Activated B cell treated with CpG ODN at 0.5 μM for 24 hours (primary cell): ENCODE measurements at regions of chr6 and their contacts with region 1.

Region 1: GRCh38 chr6:137938770-137939379 is 71.8 kb downstream of the TNFAIP3 start:
- DNase-seq: no peak
- ATAC-seq: no peak
- H3K4me3 Mint-ChIP-seq: no peak overlapping the region
- H3K27ac Mint-ChIP-seq: no peak overlapping the region
- H3K4me1 Mint-ChIP-seq: peaks cover 18% of the 10 kb centered on the region
- H3K27me3 Mint-ChIP-seq: no peaks in the 10 kb centered on the region
- CTCF ChIP-seq: no peak

Region 2: DNA sequence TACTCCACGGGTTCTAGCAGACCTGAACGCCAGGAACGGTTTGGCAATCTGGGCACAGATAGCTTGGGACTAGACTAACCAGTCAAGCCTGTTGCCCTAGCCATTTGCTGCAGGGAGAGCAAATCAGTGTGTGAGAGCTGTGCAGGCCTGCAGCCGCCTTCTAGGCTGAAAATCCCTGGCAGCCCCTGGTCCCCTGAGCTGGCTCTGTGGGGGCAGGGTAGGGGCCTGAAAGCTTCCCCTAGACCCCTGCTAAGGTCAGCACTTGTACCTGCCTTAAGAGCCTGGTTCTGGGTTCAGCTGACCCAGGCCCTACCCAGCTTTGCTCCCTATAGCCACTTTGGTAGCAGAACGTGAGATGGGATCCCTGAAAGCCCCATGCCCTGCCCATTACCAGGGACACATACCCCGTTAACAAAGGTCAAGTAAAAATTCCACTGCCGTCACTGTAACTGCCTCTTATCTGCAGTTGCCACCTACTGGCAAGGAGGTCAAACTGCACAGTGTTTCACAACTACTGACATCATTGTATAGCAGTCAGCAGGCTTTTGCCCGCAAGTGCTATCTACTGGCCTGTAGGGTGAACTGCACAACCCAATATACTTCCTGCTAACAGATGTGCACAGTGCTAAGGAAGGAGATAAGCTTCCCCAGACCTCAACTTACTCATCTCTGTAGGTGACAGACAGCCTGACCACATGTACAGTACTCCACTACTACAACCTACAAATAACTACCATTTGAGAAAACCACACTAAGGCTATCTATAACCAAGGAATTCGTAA is 349.6 kb before region 1 on chr6:
- CTCF ChIA-PET with region 1: no interaction called
- POLR2A ChIA-PET with region 1: no interaction called
- intact Hi-C with region 1: no loop called
- DNase-seq: no peak
- ATAC-seq: peak; percentile 90
- H3K4me3 Mint-ChIP-seq: no peak overlapping the region
- H3K27ac Mint-ChIP-seq: no peak overlapping the region
- H3K4me1 Mint-ChIP-seq: no peaks in the 10 kb centered on the region
- H3K27me3 Mint-ChIP-seq: peaks cover 30% of the 10 kb centered on the region
- CTCF ChIP-seq: no peak

Region 3: GRCh38 chr6:137846772-137847313 is 92.0 kb before region 1 on chr6:
- CTCF ChIA-PET with region 1: no interaction called
- POLR2A ChIA-PET with region 1: no interaction called
- intact Hi-C with region 1: no loop called
- DNase-seq: peak; percentile 27
- ATAC-seq: peak; percentile 90
- H3K4me3 Mint-ChIP-seq: no peak overlapping the region
- H3K27ac Mint-ChIP-seq: no peak overlapping the region
- H3K4me1 Mint-ChIP-seq: peaks cover 10% of the 10 kb centered on the region
- H3K27me3 Mint-ChIP-seq: no peaks in the 10 kb centered on the region
- CTCF ChIP-seq: no peak

Region 4: GRCh38 chr6:137873273-137873762 is 65.6 kb before region 1 on chr6:
- CTCF ChIA-PET with region 1: interaction called, 132 read pairs
- POLR2A ChIA-PET with region 1: interaction called, 60 read pairs
- intact Hi-C with region 1: no loop called
- DNase-seq: peak; percentile 50
- ATAC-seq: peak; percentile 84
- H3K4me3 Mint-ChIP-seq: peak overlapping the region; percentile 96
- H3K27ac Mint-ChIP-seq: peak overlapping the region; percentile 94
- H3K4me1 Mint-ChIP-seq: peaks cover 80% of the 10 kb centered on the region
- H3K27me3 Mint-ChIP-seq: no peaks in the 10 kb centered on the region
- CTCF ChIP-seq: no peak

Region 5: GRCh38 chr6:138250513-138251247 is 311.8 kb after region 1 on chr6:
- CTCF ChIA-PET with region 1: no interaction called
- POLR2A ChIA-PET with region 1: no interaction called
- intact Hi-C with region 1: no loop called
- DNase-seq: no peak
- ATAC-seq: no peak
- H3K4me3 Mint-ChIP-seq: no peak overlapping the region
- H3K27ac Mint-ChIP-seq: no peak overlapping the region
- H3K4me1 Mint-ChIP-seq: no peaks in the 10 kb centered on the region
- H3K27me3 Mint-ChIP-seq: no peaks in the 10 kb centered on the region
- CTCF ChIP-seq: no peak